A549 (cell line): ENCODE measurements at regions of chr1 and their contacts with region 1.

Region 1: GRCh38 chr1:200890818-200891773 is 3.6 kb upstream of the INAVA start:
- DNase-seq: peak; percentile 78 to 82
- ATAC-seq: peak; percentile 49 to 68
- H3K4me3 ChIP-seq: peak overlapping the region; percentile 68
- H3K27ac ChIP-seq: peak overlapping the region; percentile 100
- H3K4me1 ChIP-seq: peaks cover 51% of the 10 kb centered on the region
- CTCF ChIP-seq: peak; percentile 87
- EP300 ChIP-seq: no peak
- POLR2A ChIP-seq: peak; percentile 43
- RAD21 ChIP-seq: peak; percentile 61 to 77

Region 2: DNA sequence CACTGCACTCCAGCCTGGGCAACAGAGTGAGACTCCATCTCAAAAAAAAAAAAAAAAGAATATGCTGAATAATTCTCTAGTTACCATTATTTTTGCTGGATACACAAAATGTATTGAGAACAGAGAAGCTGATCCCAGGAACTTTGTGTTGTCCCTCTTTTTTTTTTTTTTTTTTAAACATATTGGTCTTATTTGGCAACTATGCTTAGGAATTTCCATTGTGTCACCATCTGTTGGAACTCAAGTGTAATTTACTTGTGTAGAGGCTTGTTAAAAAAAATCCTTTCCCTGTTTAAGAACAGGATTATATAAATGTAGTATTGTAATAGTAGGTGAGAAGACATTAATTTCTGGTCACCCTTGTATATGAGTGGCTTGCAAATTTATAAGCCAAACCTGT is 123.8 kb before region 1 on chr1:
- CTCF ChIA-PET with region 1: no interaction called
- POLR2A ChIA-PET with region 1: no interaction called
- DNase-seq: no peak
- ATAC-seq: no peak
- H3K4me3 ChIP-seq: no peak overlapping the region
- H3K27ac ChIP-seq: no peak overlapping the region
- H3K4me1 ChIP-seq: peaks cover 5% of the 10 kb centered on the region; the same call in 1 of the 3 replicates
- CTCF ChIP-seq: no peak
- EP300 ChIP-seq: no peak
- POLR2A ChIP-seq: no peak
- RAD21 ChIP-seq: no peak

Region 3: GRCh38 chr1:200866521-200866920 is 24.6 kb before region 1 on chr1:
- CTCF ChIA-PET with region 1: interaction called, 12 read pairs
- POLR2A ChIA-PET with region 1: no interaction called
- DNase-seq: no peak
- ATAC-seq: peak; percentile 11 to 18; a peak in 3 of 6 replicates
- H3K4me3 ChIP-seq: no peak overlapping the region
- H3K27ac ChIP-seq: 0 out of 6 replicates have a peak overlapping the region, but pooled peaks of 1 of the 2 experiments have one; percentile 25
- H3K4me1 ChIP-seq: peaks cover 6% of the 10 kb centered on the region; the same call in 1 of the 3 replicates
- CTCF ChIP-seq: no peak
- EP300 ChIP-seq: no peak
- POLR2A ChIP-seq: no peak
- RAD21 ChIP-seq: no peak

Region 4: GRCh38 chr1:200877839-200878551 is 13.1 kb before region 1 on chr1:
- CTCF ChIA-PET with region 1: interaction called, 57 read pairs
- POLR2A ChIA-PET with region 1: interaction called, 4 read pairs
- DNase-seq: no peak
- ATAC-seq: peak; percentile 25 to 39; a peak in 2 of 6 replicates
- H3K4me3 ChIP-seq: no peak overlapping the region
- H3K27ac ChIP-seq: 0 out of 6 replicates have a peak overlapping the region, but pooled peaks of 1 of the 2 experiments have one; percentile 4
- H3K4me1 ChIP-seq: peaks cover 6% of the 10 kb centered on the region; the same call in 2 of the 3 replicates
- CTCF ChIP-seq: no peak
- EP300 ChIP-seq: no peak
- POLR2A ChIP-seq: no peak
- RAD21 ChIP-seq: no peak

Region 5: DNA sequence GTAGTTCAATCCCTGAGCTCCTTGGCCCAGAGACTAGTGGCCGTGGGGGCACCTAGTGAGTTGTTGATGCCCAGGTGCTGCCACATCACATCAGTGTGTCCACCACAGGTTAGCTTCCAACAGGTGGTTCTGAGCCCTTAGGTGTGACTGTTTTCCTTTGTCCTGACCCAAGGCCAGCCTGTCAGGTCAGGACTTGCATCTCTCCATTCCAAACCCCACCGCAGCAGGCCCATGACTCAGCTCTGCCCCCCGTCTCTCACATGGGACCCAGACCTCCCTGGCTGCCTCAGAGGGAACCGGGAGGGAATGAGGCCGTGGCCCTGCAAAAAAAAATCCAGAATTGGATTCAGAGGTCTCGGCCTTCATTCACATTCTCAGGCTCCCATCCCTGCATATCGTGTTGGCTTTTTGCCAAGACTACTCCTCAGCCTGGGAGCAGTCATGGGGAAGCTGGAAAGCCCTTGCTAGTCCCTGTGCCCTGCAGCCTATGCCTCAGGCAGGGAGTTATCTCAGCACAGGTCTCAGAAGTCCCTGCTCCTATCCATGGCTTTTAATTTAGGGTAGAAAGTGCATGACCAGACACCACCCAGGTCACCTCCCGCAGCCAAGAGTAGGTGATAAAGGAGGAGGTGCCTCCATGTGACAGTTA is 10.8 kb after region 1 on chr1:
- CTCF ChIA-PET with region 1: interaction called, 16 read pairs
- POLR2A ChIA-PET with region 1: interaction called, 58 read pairs
- DNase-seq: no peak
- ATAC-seq: no peak
- H3K4me3 ChIP-seq: no peak overlapping the region
- H3K27ac ChIP-seq: peak overlapping the region; percentile 44 to 100; a peak in 5 of 6 replicates
- H3K4me1 ChIP-seq: peaks cover 99% of the 10 kb centered on the region
- CTCF ChIP-seq: no peak
- EP300 ChIP-seq: no peak
- POLR2A ChIP-seq: no peak
- RAD21 ChIP-seq: no peak

Region 6: GRCh38 chr1:200907611-200908097 is 16.6 kb after region 1 on chr1:
- CTCF ChIA-PET with region 1: interaction called, 16 read pairs
- POLR2A ChIA-PET with region 1: interaction called, 58 read pairs
- DNase-seq: peak in 1 of 2 experiments; percentile 79
- ATAC-seq: peak; percentile 82 to 91
- H3K4me3 ChIP-seq: no peak overlapping the region
- H3K27ac ChIP-seq: peak overlapping the region; percentile 77 to 82
- H3K4me1 ChIP-seq: peaks cover 76% of the 10 kb centered on the region
- CTCF ChIP-seq: no peak
- EP300 ChIP-seq: peak in 1 of 2 experiments; percentile 48; a peak in 1 of 5 replicates
- POLR2A ChIP-seq: no peak
- RAD21 ChIP-seq: no peak; a peak in 2 of 5 replicates

Region 7: GRCh38 chr1:201050515-201051277 is 159.6 kb after region 1 on chr1:
- CTCF ChIA-PET with region 1: interaction called, 12 read pairs
- POLR2A ChIA-PET with region 1: no interaction called
- DNase-seq: no peak
- ATAC-seq: no peak
- H3K4me3 ChIP-seq: no peak overlapping the region
- H3K27ac ChIP-seq: no peak overlapping the region
- H3K4me1 ChIP-seq: no peaks in the 10 kb centered on the region
- CTCF ChIP-seq: no peak
- EP300 ChIP-seq: no peak
- POLR2A ChIP-seq: no peak
- RAD21 ChIP-seq: no peak